MCF 10A (cell line): ENCODE measurements at regions of chr7 and their contacts with region 1.

Region 1: DNA sequence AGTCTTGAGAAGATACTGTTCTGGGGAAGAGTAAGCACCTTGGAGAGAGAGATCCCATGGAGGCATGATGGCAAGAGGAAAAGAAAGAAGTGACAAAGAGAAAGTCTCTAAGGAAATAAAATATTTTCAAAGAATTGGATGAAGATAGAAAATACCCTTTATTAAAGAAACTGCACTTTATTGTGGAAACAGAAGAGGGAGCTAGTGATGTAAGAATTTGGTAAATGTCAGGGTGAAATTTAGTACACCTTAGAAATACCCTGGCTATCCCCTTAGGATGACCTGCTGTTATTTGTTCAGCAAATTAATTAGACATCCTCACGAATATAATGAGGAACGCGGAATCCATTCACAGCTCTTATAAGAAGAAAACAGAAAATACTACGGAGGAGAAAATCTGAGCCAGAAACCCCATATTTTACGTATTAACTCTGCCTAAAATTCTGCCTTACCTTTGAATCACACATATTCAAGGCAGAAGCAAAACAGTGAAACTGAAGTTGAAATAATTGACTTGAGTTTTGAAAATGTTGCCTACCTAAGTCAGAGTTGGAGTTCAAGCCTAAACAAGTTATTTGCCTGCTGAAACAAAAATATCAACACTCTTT is 90.7 kb downstream of the TFPI2 start:
- DNase-seq: peak; percentile 34
- H3K4me3 Mint-ChIP-seq: no peak overlapping the region
- H3K27ac Mint-ChIP-seq: no peak overlapping the region
- H3K4me1 Mint-ChIP-seq: peaks cover 6% of the 10 kb centered on the region
- H3K27me3 Mint-ChIP-seq: no peaks in the 10 kb centered on the region
- CTCF ChIP-seq: peak; percentile 56

Region 2: DNA sequence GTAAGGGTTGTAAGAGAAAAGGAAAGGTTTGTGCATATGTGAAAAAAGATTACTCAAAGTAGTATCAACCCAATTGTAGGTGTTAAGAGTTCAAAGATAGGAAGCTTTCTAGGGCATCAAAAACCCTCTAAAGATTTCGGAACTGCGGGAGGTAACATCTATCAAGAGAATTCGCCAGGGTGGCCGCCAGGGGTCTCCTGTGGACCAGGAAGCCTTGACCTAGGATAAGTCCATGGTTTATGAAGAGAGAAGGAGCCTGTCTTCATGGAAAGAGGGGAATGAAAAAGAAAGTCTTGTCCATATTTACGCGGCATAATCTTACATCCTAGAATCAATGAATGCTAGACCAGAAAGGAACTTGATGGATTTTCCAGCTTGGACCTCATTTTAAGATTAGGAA is 84.6 kb before region 1 on chr7:
- CTCF ChIA-PET with region 1: interaction called, 4 read pairs
- POLR2A ChIA-PET with region 1: no interaction called
- intact Hi-C with region 1: loop called (anchors 1 kb)
- DNase-seq: peak; percentile 54
- H3K4me3 Mint-ChIP-seq: no peak overlapping the region
- H3K27ac Mint-ChIP-seq: no peak overlapping the region
- H3K4me1 Mint-ChIP-seq: peaks cover 18% of the 10 kb centered on the region
- H3K27me3 Mint-ChIP-seq: peaks cover 74% of the 10 kb centered on the region
- CTCF ChIP-seq: peak; percentile 48

Region 3: GRCh38 chr7:93828260-93828659 is 28.4 kb after region 1 on chr7:
- CTCF ChIA-PET with region 1: no interaction called
- POLR2A ChIA-PET with region 1: no interaction called
- intact Hi-C with region 1: no loop called
- DNase-seq: no peak
- H3K4me3 Mint-ChIP-seq: no peak overlapping the region
- H3K27ac Mint-ChIP-seq: no peak overlapping the region
- H3K4me1 Mint-ChIP-seq: no peaks in the 10 kb centered on the region
- H3K27me3 Mint-ChIP-seq: no peaks in the 10 kb centered on the region
- CTCF ChIP-seq: no peak

Region 4: GRCh38 chr7:93890464-93891068 is 90.7 kb after region 1 on chr7 and contains the start of gene TFPI2:
- CTCF ChIA-PET with region 1: no interaction called
- POLR2A ChIA-PET with region 1: no interaction called
- intact Hi-C with region 1: loop called (anchors 10 kb)
- DNase-seq: peak; percentile 42
- H3K4me3 Mint-ChIP-seq: peak within 1 kb of the TSS; percentile 35
- H3K27ac Mint-ChIP-seq: no peak within 1 kb of the TSS
- H3K4me1 Mint-ChIP-seq: no peaks in the 10 kb centered on the region
- H3K27me3 Mint-ChIP-seq: no peaks in the 10 kb centered on the region
- CTCF ChIP-seq: no peak
- total RNA-seq, gene TFPI2: not detected in 2 replicates